CD4-positive, alpha-beta T cell (primary cell): ENCODE measurements at regions of chr7 and their contacts with region 1.

Region 1: DNA sequence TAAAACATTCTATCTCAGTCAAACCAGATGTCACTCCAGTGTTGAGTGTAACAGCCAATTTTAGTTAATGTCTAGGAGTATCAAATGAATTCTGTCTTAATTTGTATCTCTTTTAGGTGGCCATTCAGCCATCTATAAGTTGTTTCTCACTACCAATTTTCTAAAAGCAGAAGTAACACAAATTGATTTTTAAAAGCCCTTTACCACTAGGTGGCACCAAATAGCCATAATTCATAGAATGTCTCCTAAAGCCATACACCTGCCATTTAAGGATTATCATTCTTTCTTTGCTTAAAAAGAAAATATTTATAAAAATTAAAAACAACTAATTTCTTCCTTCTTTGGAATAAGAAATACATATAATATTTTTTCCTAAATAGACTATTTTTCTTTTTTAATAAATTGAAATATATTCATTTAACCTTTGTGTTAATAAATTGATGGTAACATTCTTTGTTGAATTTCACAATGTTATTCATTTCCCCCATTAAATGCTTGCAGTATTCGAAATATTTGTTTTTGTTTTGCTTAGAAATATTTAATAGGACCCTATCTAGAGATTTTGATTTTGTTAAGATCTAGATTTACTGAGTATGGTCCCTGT is 107.8 kb upstream of the PPP1R3A start:
- DNase-seq: peak in 4 of 14 experiments; percentile 18 to 75 (median 70)
- ATAC-seq: no peak
- H3K4me3 ChIP-seq: no peak overlapping the region
- H3K4me3 Mint-ChIP-seq: no peak overlapping the region
- H3K27ac ChIP-seq: no peak overlapping the region
- H3K27ac Mint-ChIP-seq: no peak overlapping the region
- H3K4me1 ChIP-seq: no peaks in the 10 kb centered on the region
- H3K4me1 Mint-ChIP-seq: no peaks in the 10 kb centered on the region
- H3K27me3 ChIP-seq: no peaks in the 10 kb centered on the region
- H3K27me3 Mint-ChIP-seq: no peaks in the 10 kb centered on the region
- CTCF ChIP-seq: peak; percentile 84

Region 2: DNA sequence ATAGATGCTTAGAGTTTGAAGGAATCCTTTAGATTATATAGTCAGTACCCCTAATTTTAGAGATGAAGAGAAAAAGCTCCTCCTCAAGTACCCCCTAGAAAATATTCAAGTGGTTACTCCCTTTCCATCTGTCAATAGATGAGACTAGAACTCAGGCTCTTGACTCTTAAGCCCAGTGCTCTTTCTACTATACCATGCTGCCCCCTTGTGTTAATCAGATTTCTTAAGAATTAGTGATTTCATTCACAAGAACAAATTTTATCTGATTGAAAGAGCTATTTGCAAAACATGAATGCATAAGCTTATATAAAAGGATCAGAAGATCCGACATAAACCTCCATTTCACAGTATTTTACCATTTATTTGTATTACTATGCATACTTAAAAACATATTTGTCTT is 1824.7 kb after region 1 on chr7:
- CTCF ChIA-PET with region 1: interaction called, 3 read pairs
- POLR2A ChIA-PET with region 1: no interaction called
- intact Hi-C with region 1: loop called (anchors 1 to 2 kb)
- DNase-seq: peak in 3 of 14 experiments; percentile 42 to 46 (median 46)
- ATAC-seq: no peak
- H3K4me3 ChIP-seq: no peak overlapping the region
- H3K4me3 Mint-ChIP-seq: no peak overlapping the region
- H3K27ac ChIP-seq: no peak overlapping the region
- H3K27ac Mint-ChIP-seq: no peak overlapping the region
- H3K4me1 ChIP-seq: no peaks in the 10 kb centered on the region
- H3K4me1 Mint-ChIP-seq: no peaks in the 10 kb centered on the region
- H3K27me3 ChIP-seq: no peaks in the 10 kb centered on the region
- H3K27me3 Mint-ChIP-seq: no peaks in the 10 kb centered on the region
- CTCF ChIP-seq: peak; percentile 15

Region 3: GRCh38 chr7:115910541-115911164 is 1884.1 kb after region 1 on chr7:
- CTCF ChIA-PET with region 1: no interaction called
- POLR2A ChIA-PET with region 1: no interaction called
- intact Hi-C with region 1: loop called (anchors 2 to 5 kb)
- DNase-seq: peak in 3 of 14 experiments; percentile 22 to 24 (median 23)
- ATAC-seq: no peak
- H3K4me3 ChIP-seq: no peak overlapping the region
- H3K4me3 Mint-ChIP-seq: no peak overlapping the region
- H3K27ac ChIP-seq: no peak overlapping the region
- H3K27ac Mint-ChIP-seq: no peak overlapping the region
- H3K4me1 ChIP-seq: no peaks in the 10 kb centered on the region
- H3K4me1 Mint-ChIP-seq: no peaks in the 10 kb centered on the region
- H3K27me3 ChIP-seq: no peaks in the 10 kb centered on the region
- H3K27me3 Mint-ChIP-seq: peaks cover 6% of the 10 kb centered on the region
- CTCF ChIP-seq: peak; percentile 16